Gastrocnemius medialis (tissue), 4 donors: ENCODE measurements at regions of chr6 and their contacts with region 1.

Region 1: DNA sequence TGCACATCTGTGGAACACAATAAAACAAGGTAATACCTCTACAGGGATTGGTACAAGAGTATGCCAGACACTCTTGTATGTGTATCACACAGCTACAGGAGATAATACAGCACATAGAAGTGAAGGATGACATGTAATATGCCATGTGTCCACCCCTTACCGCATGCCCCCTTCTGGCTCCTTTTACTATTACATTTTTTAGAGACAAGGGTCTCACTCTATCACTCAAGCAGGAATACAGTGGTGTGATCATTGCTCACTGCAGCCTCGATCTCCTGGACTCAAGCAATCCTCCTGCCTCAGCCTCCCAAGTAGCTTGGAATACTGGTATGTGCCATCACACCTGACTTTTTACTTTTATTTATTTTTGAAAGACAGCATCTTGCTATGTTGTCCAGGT is 4.2 kb upstream of the NCR3 start:
- DNase-seq: no peak
- ATAC-seq: no peak
- H3K4me3 ChIP-seq: no peak overlapping the region
- H3K27ac ChIP-seq: no peak overlapping the region
- H3K4me1 ChIP-seq: no peaks in the 10 kb centered on the region
- H3K27me3 ChIP-seq: no peaks in the 10 kb centered on the region
- CTCF ChIP-seq: peak in 2 of 5 experiments; percentile 18 to 44
- POLR2A ChIP-seq: no peak

Region 2: GRCh38 chr6:31293343-31293742 is 303.7 kb before region 1 on chr6:
- in situ Hi-C with region 1: no loop called
- intact Hi-C with region 1: no loop called
- DNase-seq: no peak
- ATAC-seq: no peak
- H3K4me3 ChIP-seq: no peak overlapping the region
- H3K27ac ChIP-seq: no peak overlapping the region
- H3K4me1 ChIP-seq: no peaks in the 10 kb centered on the region
- H3K27me3 ChIP-seq: peaks cover 5 to 8% (median 6%) of the 10 kb centered on the region in 3 donors
- CTCF ChIP-seq: no peak
- POLR2A ChIP-seq: no peak

Region 3: DNA sequence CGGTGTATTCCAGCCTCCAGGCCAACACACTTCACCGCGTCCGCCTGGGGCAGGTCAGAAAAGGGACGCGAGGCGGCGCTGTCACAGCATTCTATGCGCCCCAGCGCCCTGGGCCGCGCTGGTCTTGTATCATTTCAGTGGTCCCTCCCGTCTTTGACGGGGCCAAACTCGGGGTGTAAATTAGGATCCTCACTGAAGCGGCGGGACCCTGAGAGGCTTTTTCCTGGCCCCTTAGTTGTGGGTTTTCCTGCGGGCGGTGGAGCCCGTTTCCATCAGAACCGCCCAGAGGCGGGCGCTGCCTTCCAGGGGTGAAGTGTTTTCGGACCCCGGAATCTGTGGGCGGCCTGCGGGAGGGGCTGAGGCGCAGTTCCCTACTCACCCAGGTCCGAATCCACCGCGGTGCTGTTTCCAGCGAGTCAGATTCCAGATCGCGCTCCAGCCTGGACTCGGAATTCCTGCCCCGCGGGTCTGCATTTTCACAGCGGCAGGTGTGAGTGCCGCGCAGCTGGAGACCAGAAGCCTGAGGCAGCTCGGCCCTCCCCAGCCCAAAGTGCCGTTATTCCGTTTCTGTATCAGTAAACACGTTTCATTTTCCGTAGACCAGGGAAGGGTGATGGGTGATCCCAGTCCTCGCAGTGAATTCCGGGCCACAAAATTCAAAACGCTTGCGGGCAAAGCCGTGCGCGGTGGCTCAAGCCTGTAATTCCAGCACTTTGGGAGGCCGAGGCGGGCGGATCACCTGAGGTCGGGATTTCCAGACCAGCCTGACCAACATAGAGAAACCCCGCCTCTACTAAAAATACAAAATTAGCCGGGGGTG is 102.9 kb before region 1 on chr6:
- in situ Hi-C with region 1: no loop called
- intact Hi-C with region 1: loop called (anchors 5 kb)
- DNase-seq: peak; percentile 50 to 59
- ATAC-seq: peak; percentile 71 to 75
- H3K4me3 ChIP-seq: peak overlapping the region; percentile 48 to 64 (median 56)
- H3K27ac ChIP-seq: peak overlapping the region; percentile 44 to 60 (median 58)
- H3K4me1 ChIP-seq: peaks cover 0 to 16% of the 10 kb centered on the region in 2 donors
- H3K27me3 ChIP-seq: peaks cover 10 to 41% (median 35%) of the 10 kb centered on the region in 3 donors
- CTCF ChIP-seq: peak; percentile 50 to 75 (median 60)
- POLR2A ChIP-seq: no peak

Region 4: DNA sequence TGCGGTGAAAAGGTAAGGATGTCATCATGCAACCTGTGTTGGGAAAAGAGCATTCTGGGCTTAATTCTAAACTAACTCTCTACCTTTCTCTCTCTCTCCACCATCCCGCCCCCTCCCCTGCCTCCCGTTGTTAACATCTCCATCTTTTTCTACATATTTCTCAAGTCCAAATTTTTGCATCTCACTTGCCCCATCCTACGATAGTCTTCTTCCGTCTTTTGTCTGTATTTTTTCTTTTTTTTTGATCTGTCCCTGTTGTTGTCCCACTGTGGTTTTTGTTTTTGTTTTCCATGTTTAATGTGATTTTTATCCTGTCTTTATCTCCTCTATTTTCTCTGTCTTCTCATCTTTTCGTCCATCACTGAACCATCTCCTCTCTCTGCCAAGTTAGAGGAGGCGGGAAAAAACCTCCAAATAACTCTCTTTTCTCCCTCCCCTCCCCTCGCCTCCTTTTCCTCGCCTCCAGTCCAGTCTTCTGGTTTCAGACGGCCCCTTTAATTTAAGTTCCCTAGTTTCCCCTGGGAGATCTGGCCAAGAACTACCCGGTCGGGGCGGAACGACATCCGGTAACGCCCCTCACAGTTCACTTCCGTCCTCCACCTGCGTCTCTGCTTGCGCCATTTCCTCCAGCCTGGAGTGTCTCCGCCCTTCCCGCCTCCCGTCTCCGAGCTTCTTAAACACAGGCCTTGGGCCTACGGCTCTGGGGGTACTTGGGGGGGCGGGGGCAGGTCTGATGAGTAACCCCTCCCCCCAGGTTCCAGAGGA is 49.9 kb before region 1 on chr6 and contains the start of gene NFKBIL1:
- in situ Hi-C with region 1: loop called (anchors 5 to 10 kb)
- intact Hi-C with region 1: loop called (anchors 1 kb)
- DNase-seq: peak; percentile 96
- ATAC-seq: peak; percentile 97 to 98
- H3K4me3 ChIP-seq: peak within 1 kb of the TSS; percentile 48 to 72 (median 63)
- H3K27ac ChIP-seq: peak within 1 kb of the TSS; percentile 86 to 97 (median 90)
- H3K4me1 ChIP-seq: peaks cover 20 to 22% of the 10 kb centered on the region in 2 donors
- H3K27me3 ChIP-seq: no peaks in the 10 kb centered on the region
- CTCF ChIP-seq: peak in 1 of 5 experiments; percentile 13
- POLR2A ChIP-seq: peak; percentile 64 to 68
- total RNA-seq, gene NFKBIL1: 17.6 to 21.7 (median 20.3) TPM

Region 5: DNA sequence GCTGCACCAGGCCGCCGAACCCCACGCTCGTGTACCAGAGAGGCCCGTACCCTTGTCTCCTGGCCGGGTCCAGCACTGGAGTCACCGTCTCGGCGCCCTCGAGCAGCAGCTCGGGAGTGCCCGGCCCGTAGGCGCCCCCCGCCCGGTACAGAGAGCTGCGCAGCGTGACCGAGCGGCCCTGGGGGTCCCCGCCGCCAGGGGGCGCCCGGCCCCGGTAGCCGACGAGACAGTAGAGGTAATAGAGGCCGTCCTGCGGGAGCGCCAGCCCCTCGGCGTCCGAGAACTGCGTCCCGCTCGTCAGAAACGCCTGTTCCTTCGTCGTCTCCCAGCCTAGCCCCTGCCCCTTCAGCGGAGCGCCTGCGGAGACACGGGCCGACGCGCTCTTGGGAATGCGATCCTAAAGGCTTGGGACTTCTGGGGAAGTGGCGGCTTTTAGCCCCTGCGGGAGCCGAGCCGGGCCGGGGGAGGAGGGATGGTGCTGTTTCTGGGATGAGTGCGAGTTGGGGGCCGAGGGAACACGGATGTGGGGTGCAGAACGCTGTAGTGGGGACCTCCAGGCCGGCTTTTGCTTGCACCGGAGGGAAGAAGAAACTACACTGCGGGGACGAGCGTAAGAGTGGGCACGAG is 16.1 kb before region 1 on chr6:
- in situ Hi-C with region 1: no loop called
- intact Hi-C with region 1: loop called (anchors 1 kb)
- DNase-seq: peak; percentile 66 to 77
- ATAC-seq: peak; percentile 92 to 95
- H3K4me3 ChIP-seq: peak overlapping the region; percentile 67 to 96 (median 90)
- H3K27ac ChIP-seq: peak overlapping the region; percentile 74 to 84 (median 77)
- H3K4me1 ChIP-seq: peaks cover 0 to 5% of the 10 kb centered on the region in 2 donors
- H3K27me3 ChIP-seq: no peaks in the 10 kb centered on the region
- CTCF ChIP-seq: peak; percentile 94 to 98 (median 96)
- POLR2A ChIP-seq: peak in 1 of 2 donors; percentile 22

Region 6: GRCh38 chr6:31614684-31615578 is 17.9 kb after region 1 on chr6 and contains the start of gene AIF1:
- in situ Hi-C with region 1: no loop called
- intact Hi-C with region 1: no loop called
- DNase-seq: no peak
- ATAC-seq: no peak
- H3K4me3 ChIP-seq: peak within 1 kb of the TSS in 1 of 4 donors; percentile 27
- H3K27ac ChIP-seq: no peak within 1 kb of the TSS
- H3K4me1 ChIP-seq: peaks cover 4% of the 10 kb centered on the region in 2 donors
- H3K27me3 ChIP-seq: no peaks in the 10 kb centered on the region
- CTCF ChIP-seq: no peak
- POLR2A ChIP-seq: no peak
- total RNA-seq, gene AIF1: 4.3 to 11.0 (median 4.8) TPM